ENCODE measurements at regions of chr1 and their contacts with region 1.

Region 1: GRCh38 chr1:3247521-3248121 is 178.6 kb downstream of the PRDM16 start:
- DNase-seq: peak; percentile 2
- H3K4me3 ChIP-seq: no peak overlapping the region
- H3K27ac ChIP-seq: no peak overlapping the region
- H3K4me1 ChIP-seq: no peaks in the 10 kb centered on the region
- H3K27me3 ChIP-seq: peaks cover 2% of the 10 kb centered on the region
- CTCF ChIP-seq: no peak

Region 2: GRCh38 chr1:3283849-3284248 is 36.2 kb after region 1 on chr1:
- CTCF ChIA-PET with region 1: no interaction called
- dilution Hi-C with region 1: loop called (anchors 5 kb)
- in situ Hi-C with region 1: no loop called
- intact Hi-C with region 1: no loop called
- DNase-seq: no peak
- H3K4me3 ChIP-seq: no peak overlapping the region
- H3K27ac ChIP-seq: no peak overlapping the region
- H3K4me1 ChIP-seq: no peaks in the 10 kb centered on the region
- H3K27me3 ChIP-seq: peaks cover 3% of the 10 kb centered on the region
- CTCF ChIP-seq: no peak

Measured in mammary epithelial cell (primary cell).